Gastrocnemius medialis (tissue), 4 donors: ENCODE measurements at regions of chr1 and their contacts with region 1.

Region 1: DNA sequence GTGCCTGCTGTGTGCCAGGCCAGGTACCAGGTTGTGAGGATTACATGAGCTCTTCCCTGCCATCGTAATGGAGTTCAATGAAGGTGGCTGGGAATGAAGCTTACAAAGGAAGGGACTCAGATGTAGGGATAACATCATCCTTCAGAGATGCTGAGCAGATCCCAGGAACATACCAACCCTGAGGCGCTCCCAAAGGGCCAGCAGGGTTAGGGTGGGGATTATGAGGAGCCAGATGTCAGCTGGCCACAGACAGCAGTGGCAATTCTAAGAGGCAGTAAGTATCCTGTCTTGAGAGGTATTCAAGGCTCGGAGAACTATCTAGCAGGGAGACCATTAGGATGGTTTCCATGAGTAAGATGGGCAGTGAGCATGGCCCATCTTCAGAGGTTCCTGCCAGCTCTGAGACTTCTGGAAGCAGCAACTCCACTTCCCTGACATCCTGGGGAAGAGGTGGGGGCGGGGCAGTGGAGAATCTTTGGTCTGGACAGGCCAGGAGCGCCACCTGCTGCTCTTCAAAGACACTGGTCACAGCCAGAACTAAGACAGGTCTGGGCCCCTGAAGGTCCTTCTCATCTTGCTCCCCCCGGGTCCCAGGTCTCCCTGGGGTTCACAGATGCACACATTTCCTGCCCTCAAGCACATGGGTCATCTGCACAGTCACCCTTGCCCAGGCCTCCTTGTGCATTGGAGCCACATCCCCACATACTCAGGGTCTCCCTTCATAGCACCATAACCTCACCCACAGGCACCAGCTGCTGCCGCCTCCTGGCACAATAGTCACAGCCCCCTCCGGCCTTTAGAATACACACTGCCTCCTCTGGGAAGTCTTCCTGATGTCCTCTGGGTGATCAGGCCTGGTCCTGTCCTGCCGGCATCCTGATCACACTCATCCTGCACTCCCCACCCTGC is 2.7 kb upstream of the SDC3 start:
- DNase-seq: peak; percentile 72 to 80
- ATAC-seq: peak; percentile 84
- H3K4me3 ChIP-seq: no peak overlapping the region
- H3K27ac ChIP-seq: no peak overlapping the region
- H3K4me1 ChIP-seq: no peaks in the 10 kb centered on the region
- H3K27me3 ChIP-seq: peaks cover 0 to 7% (median 0%) of the 10 kb centered on the region in 3 donors
- CTCF ChIP-seq: peak; percentile 84 to 89 (median 87)
- POLR2A ChIP-seq: no peak

Region 2: GRCh38 chr1:30718636-30719405 is 192.5 kb before region 1 on chr1:
- in situ Hi-C with region 1: loop called (anchors 5 to 10 kb)
- intact Hi-C with region 1: loop called (anchors 1 kb)
- DNase-seq: peak; percentile 71 to 94
- ATAC-seq: peak; percentile 79 to 81
- H3K4me3 ChIP-seq: peak overlapping the region; percentile 60 to 85 (median 73)
- H3K27ac ChIP-seq: peak overlapping the region; percentile 97 to 98 (median 98)
- H3K4me1 ChIP-seq: peaks cover 0 to 3% of the 10 kb centered on the region in 2 donors
- H3K27me3 ChIP-seq: no peaks in the 10 kb centered on the region
- CTCF ChIP-seq: peak; percentile 98 to 100 (median 99)
- POLR2A ChIP-seq: peak; percentile 80 to 85